ENCODE measurements at regions of chr14 and their contacts with region 1.

Region 1: DNA sequence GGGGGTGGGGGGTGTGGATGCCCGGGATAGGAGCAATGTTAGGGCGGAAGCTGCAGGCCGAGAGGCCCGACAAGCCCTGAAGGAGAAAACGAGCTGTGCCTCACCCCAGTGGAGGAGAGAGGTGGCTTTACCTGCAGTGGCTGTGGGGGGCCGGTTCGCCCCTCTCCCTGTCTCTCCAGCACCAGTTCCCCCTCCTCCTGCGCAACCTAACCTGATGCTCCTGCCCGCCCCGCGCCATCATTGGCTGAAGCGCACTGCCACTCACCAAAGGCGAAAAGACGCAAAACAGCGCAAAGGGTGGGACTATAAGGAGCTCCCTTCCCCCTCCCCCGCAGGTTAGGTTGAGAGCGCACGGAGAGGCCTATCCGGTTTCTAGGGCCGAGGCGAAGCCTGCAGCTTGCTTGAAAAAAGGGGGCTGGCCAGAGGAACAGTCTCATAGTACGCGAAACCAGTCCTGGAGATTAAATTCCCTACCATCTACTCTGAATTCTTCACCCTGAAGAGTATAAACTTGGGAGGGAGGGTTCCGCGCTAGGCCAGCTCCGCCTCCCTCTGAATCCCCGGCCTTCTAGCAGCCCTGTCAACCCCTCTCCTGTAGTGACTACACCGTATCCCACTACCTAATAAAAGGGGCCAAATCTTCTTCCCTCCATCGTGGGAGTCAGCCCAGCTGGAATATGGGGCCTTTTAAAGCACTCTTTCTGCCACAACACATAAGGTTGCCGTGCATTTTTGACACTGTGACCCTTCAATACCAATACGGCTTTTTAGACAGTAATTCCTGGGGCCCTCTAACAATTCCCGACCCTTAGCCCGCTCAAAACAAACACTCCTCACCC is 18.6 kb downstream of the CHD8 start:
- DNase-seq: peak; percentile 91 to 98
- ATAC-seq: peak; percentile 98 to 99
- H3K4me3 ChIP-seq: peak overlapping the region; percentile 70
- H3K27ac ChIP-seq: peak overlapping the region; percentile 81 to 95
- H3K4me1 ChIP-seq: peaks cover 14% of the 10 kb centered on the region; the same call in 2 of the 3 replicates
- CTCF ChIP-seq: no peak
- EP300 ChIP-seq: no peak
- POLR2A ChIP-seq: peak; percentile 17; the same call in 1 of the 2 replicates
- RAD21 ChIP-seq: no peak

Region 2: DNA sequence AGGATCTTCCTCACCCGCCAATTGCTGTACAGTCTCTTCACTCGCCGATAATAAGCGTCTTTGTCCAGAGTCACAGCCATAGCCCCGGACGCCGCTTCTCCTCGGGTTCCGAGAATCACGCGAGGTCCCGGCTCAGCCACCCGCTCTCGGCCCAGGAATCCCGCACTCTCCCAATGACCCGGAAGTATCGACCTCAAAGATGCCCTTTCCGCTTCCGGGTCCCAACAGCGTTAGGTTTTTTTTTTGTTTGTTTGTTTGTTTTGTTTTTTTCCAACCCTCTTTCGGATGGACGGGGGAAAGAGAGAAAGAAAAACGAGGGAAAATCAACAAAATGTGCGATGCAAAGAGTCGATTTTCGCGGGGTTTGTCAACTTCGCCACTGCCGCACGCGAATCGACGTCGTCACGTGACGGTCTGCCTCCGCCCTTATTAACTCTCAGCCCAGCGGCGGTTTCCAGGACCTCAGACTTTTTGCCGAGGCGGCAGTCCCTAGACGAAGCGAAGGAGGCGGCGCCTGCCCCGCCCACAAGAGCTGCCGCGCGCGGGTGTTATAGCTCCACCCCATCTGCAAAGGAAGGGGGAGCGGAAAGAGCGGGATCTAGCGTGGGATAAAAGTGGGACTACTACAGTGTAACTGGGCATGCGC is 53.3 kb before region 1 on chr14 and contains the start of gene SUPT16H:
- CTCF ChIA-PET with region 1: no interaction called
- POLR2A ChIA-PET with region 1: interaction called, 10 read pairs
- DNase-seq: peak; percentile 80 to 95
- ATAC-seq: peak; percentile 93 to 95
- H3K4me3 ChIP-seq: peak within 1 kb of the TSS; percentile 71
- H3K27ac ChIP-seq: peak within 1 kb of the TSS; percentile 91 to 97
- H3K4me1 ChIP-seq: peaks cover 27% of the 10 kb centered on the region
- CTCF ChIP-seq: no peak
- EP300 ChIP-seq: no peak
- POLR2A ChIP-seq: peak; percentile 65
- RAD21 ChIP-seq: no peak
- polyA plus RNA-seq, gene SUPT16H: 121 and 129 TPM in 2 replicates

Measured in A549 (cell line).